Psoas muscle (tissue), 8 donors: ENCODE measurements at regions of chr12 and their contacts with region 1.

Region 1: GRCh38 chr12:103548622-103549601 is 38.2 kb upstream of the STAB2 start:
- DNase-seq: peak in 1 of 2 donors; percentile 43
- ATAC-seq: peak in 3 of 4 donors; percentile 55 to 66 (median 66)
- H3K4me3 ChIP-seq: no peak overlapping the region
- H3K27ac ChIP-seq: no peak overlapping the region
- H3K4me1 ChIP-seq: no peaks in the 10 kb centered on the region
- H3K27me3 ChIP-seq: no peaks in the 10 kb centered on the region
- CTCF ChIP-seq: peak; percentile 80

Region 2: GRCh38 chr12:102883204-102883799 is 665.6 kb before region 1 on chr12:
- intact Hi-C with region 1: loop called (anchors 2 to 10 kb)
- DNase-seq: peak; percentile 38 to 60
- ATAC-seq: no peak
- H3K4me3 ChIP-seq: no peak overlapping the region
- H3K27ac ChIP-seq: no peak overlapping the region
- H3K4me1 ChIP-seq: no peaks in the 10 kb centered on the region
- H3K27me3 ChIP-seq: peaks cover 0 to 3% (median 0%) of the 10 kb centered on the region in 3 donors
- CTCF ChIP-seq: peak; percentile 47

Region 3: GRCh38 chr12:102948941-102949352 is 600.0 kb before region 1 on chr12:
- intact Hi-C with region 1: loop called (anchors 2 to 5 kb)
- DNase-seq: peak in 1 of 2 donors; percentile 23
- ATAC-seq: no peak
- H3K4me3 ChIP-seq: no peak overlapping the region
- H3K27ac ChIP-seq: no peak overlapping the region
- H3K4me1 ChIP-seq: no peaks in the 10 kb centered on the region
- H3K27me3 ChIP-seq: peaks cover 4 to 29% (median 10%) of the 10 kb centered on the region in 3 donors
- CTCF ChIP-seq: peak; percentile 59

Region 4: DNA sequence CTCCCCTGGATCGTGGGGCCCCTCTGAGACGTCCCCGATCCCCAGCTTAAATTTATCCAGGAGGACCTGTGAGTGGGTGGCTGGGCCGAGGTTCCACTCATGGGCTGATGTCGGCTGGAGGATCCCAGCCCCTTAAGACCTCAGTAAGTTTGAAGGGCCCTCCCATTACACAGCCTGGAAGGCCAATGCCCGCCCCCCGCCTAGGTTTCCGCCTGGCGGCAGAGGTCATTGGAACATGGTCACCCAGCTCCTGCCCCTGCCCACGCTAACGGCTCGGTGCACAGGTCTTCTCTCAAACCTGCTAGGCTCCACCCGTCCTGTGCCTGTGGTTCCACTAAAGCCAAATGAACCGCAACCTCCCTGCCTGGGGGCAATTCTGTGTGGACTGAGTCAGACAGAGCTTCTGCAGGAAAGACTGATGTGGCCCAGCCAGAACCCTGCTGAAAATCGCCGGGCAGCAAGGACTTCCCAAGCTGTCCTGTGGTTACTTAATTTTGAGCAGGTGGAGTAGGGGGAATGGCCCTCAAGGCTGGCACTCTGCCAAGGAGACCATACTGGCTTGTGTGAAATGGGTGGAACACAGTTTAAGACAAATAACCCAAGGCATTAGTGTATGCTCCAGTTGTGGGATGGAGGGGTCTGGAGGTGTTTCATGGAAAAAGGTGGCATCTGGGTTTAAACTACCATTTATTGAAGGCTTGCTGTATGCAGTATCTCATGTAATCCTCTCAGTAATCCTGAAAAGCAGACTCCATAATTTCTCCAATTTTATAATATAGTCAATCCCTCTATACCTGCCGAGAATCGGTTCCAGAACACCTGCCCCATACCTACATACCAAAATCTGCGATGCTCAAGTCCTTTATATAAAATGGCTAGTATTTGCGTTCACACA is 293.0 kb after region 1 on chr12:
- intact Hi-C with region 1: no loop called
- DNase-seq: peak; percentile 37 to 67
- ATAC-seq: peak; percentile 38 to 58 (median 51)
- H3K4me3 ChIP-seq: peak overlapping the region; percentile 91
- H3K27ac ChIP-seq: peak overlapping the region; percentile 94
- H3K4me1 ChIP-seq: no peaks in the 10 kb centered on the region
- H3K27me3 ChIP-seq: no peaks in the 10 kb centered on the region
- CTCF ChIP-seq: no peak